MCF 10A (cell line): ENCODE measurements at regions of chr5 and their contacts with region 1.

Region 1: GRCh38 chr5:140718241-140718580 is 18.0 kb downstream of the ZMAT2 start:
- DNase-seq: no peak
- H3K4me3 Mint-ChIP-seq: peak overlapping the region; percentile 73
- H3K27ac Mint-ChIP-seq: peak overlapping the region; percentile 86
- H3K4me1 Mint-ChIP-seq: peaks cover 24% of the 10 kb centered on the region
- H3K27me3 Mint-ChIP-seq: no peaks in the 10 kb centered on the region
- CTCF ChIP-seq: no peak

Region 2: DNA sequence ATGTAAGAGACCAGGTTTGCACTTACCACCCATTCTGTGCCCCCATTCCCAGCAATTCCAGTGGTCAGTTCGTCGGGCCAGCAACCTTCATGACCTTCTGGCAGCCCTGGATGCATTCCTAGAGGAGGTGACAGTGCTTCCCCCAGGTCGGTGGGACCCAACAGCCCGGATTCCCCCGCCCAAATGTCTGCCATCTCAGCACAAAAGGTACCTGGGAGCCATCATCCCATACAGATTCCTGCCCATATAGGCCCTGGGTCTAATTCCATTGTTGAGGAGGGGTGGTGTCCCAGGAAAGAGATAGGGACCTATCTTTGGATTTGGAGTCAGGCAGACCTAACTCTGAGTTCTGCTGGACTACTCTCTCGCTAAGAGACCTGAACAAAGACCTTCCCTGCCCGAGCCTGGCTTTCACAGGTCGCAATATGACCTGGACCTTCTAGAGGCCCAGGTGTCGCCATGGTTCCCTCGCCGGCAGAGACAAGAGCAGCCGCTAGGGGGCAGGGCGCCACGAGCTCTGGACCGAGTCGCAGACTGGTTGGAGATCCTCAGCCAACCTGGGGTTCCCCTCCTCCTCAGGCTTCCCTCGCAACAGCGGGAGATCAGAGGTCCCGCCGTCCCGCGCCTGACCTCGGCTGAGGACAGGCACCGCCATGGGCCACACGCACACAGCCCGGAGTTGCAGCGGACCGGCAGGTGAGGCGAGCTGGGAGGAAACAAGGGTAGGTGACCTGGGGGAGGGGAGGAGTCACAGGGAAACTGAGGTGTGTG is 355.2 kb before region 1 on chr5:
- CTCF ChIA-PET with region 1: interaction called, 9 read pairs
- POLR2A ChIA-PET with region 1: no interaction called
- intact Hi-C with region 1: loop called (anchors 1 kb)
- DNase-seq: peak; percentile 86
- H3K4me3 Mint-ChIP-seq: peak overlapping the region; percentile 72
- H3K27ac Mint-ChIP-seq: no peak overlapping the region
- H3K4me1 Mint-ChIP-seq: no peaks in the 10 kb centered on the region
- H3K27me3 Mint-ChIP-seq: no peaks in the 10 kb centered on the region
- CTCF ChIP-seq: peak; percentile 99

Region 3: GRCh38 chr5:140557136-140557805 is 160.9 kb before region 1 on chr5 and contains the start of gene SRA1:
- CTCF ChIA-PET with region 1: no interaction called
- POLR2A ChIA-PET with region 1: no interaction called
- intact Hi-C with region 1: loop called (anchors 5 kb)
- DNase-seq: peak; percentile 96
- H3K4me3 Mint-ChIP-seq: peak within 1 kb of the TSS; percentile 87
- H3K27ac Mint-ChIP-seq: peak within 1 kb of the TSS; percentile 91
- H3K4me1 Mint-ChIP-seq: peaks cover 38% of the 10 kb centered on the region
- H3K27me3 Mint-ChIP-seq: no peaks in the 10 kb centered on the region
- CTCF ChIP-seq: no peak
- total RNA-seq, gene SRA1: 105 and 107 TPM in 2 replicates

Region 4: GRCh38 chr5:140575309-140575708 is 142.9 kb before region 1 on chr5:
- CTCF ChIA-PET with region 1: no interaction called
- POLR2A ChIA-PET with region 1: interaction called, 4 read pairs
- intact Hi-C with region 1: loop called (anchors 1 kb)
- DNase-seq: peak; percentile 92
- H3K4me3 Mint-ChIP-seq: no peak overlapping the region
- H3K27ac Mint-ChIP-seq: no peak overlapping the region
- H3K4me1 Mint-ChIP-seq: no peaks in the 10 kb centered on the region
- H3K27me3 Mint-ChIP-seq: no peaks in the 10 kb centered on the region
- CTCF ChIP-seq: peak; percentile 82

Region 5: GRCh38 chr5:140591747-140592372 is 126.4 kb before region 1 on chr5:
- CTCF ChIA-PET with region 1: no interaction called
- POLR2A ChIA-PET with region 1: no interaction called
- intact Hi-C with region 1: no loop called
- DNase-seq: peak; percentile 81
- H3K4me3 Mint-ChIP-seq: no peak overlapping the region
- H3K27ac Mint-ChIP-seq: no peak overlapping the region
- H3K4me1 Mint-ChIP-seq: peaks cover 21% of the 10 kb centered on the region
- H3K27me3 Mint-ChIP-seq: no peaks in the 10 kb centered on the region
- CTCF ChIP-seq: no peak

Region 6: GRCh38 chr5:140700177-140701144 is 17.8 kb before region 1 on chr5 and contains the start of gene ZMAT2:
- CTCF ChIA-PET with region 1: interaction called, 7 read pairs
- POLR2A ChIA-PET with region 1: interaction called, 48 read pairs
- intact Hi-C with region 1: no loop called
- DNase-seq: peak; percentile 100
- H3K4me3 Mint-ChIP-seq: peak within 1 kb of the TSS; percentile 87
- H3K27ac Mint-ChIP-seq: peak within 1 kb of the TSS; percentile 98
- H3K4me1 Mint-ChIP-seq: peaks cover 13% of the 10 kb centered on the region
- H3K27me3 Mint-ChIP-seq: no peaks in the 10 kb centered on the region
- CTCF ChIP-seq: no peak
- total RNA-seq, gene ZMAT2: 54.9 and 70.4 TPM in 2 replicates